ENCODE measurements at regions of chr3 and their contacts with region 1.

Region 1: GRCh38 chr3:14780927-14781507 is 37.7 kb upstream of the FGD5 start:
- DNase-seq: peak; percentile 80 to 85 (median 84)
- H3K4me3 ChIP-seq: no peak overlapping the region
- H3K27ac ChIP-seq: no peak overlapping the region
- H3K4me1 ChIP-seq: no peaks in the 10 kb centered on the region
- H3K27me3 ChIP-seq: no peaks in the 10 kb centered on the region

Region 2: DNA sequence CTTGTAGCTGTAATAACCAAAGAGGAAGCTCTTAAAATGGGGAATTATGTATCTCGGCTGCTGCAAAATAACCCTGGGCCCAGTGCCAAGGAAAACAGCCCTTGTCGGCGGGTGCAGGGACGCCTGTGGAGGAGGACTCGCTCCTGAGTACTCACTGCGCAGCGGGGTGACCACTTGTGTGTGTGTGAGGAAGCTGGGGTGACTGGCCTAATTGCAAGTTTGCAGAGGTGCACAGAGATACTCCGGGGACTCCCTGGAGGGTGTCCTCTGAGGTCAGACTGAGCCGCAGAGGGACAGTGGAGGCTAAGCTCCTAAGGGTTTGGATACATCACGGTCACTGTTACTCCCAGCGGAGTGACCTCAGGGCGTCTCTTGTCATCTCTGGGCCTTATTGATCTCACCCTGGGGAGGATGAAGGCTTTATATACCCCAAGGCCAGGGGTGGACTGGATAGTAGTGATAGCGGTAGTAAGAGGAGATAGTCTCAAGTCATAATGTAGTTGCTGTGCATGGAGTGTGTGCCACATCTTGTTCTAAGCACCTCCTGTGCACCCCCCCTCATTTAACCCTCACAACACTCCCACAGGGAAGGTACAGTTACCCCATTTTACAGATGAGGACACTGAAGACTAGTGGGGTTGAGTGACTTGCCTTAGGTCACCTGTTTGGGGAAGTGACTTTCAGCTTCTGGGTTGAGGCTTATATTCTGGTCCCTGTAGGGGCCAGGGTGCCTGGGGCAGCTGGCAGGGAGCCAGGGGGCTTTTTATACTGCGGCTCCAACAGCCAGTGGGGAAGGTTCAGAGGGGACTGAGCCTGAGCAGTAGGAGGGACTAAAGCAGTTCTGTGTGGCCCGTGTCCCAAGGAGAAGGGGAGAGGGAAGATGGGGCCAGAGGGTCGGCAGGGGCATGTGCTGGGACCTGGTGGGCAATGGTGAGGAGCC is 341.2 kb before region 1 on chr3:
- CTCF ChIA-PET with region 1: no interaction called
- POLR2A ChIA-PET with region 1: no interaction called
- DNase-seq: peak; percentile 70 to 92 (median 90)
- H3K4me3 ChIP-seq: peak overlapping the region in 4 of 7 experiments; percentile 19 to 61 (median 40)
- H3K27ac ChIP-seq: no peak overlapping the region
- H3K4me1 ChIP-seq: peaks cover 13 to 67% (median 54%) of the 10 kb centered on the region in 4 experiments
- H3K27me3 ChIP-seq: no peaks in the 10 kb centered on the region

Region 3: GRCh38 chr3:14602006-14602803 is 178.8 kb before region 1 on chr3:
- CTCF ChIA-PET with region 1: no interaction called
- POLR2A ChIA-PET with region 1: no interaction called
- DNase-seq: no peak
- H3K4me3 ChIP-seq: peak overlapping the region in 3 of 7 experiments; percentile 3 to 46 (median 38)
- H3K27ac ChIP-seq: no peak overlapping the region
- H3K4me1 ChIP-seq: peaks cover 0 to 7% (median 3%) of the 10 kb centered on the region in 4 experiments
- H3K27me3 ChIP-seq: peaks cover 12 to 99% (median 43%) of the 10 kb centered on the region in 5 experiments

Region 4: GRCh38 chr3:14633819-14634424 is 147.1 kb before region 1 on chr3:
- CTCF ChIA-PET with region 1: interaction called, 11 read pairs
- POLR2A ChIA-PET with region 1: no interaction called
- DNase-seq: peak; percentile 78 to 88 (median 85)
- H3K4me3 ChIP-seq: no peak overlapping the region
- H3K27ac ChIP-seq: no peak overlapping the region
- H3K4me1 ChIP-seq: no peaks in the 10 kb centered on the region
- H3K27me3 ChIP-seq: peaks cover 0 to 12% (median 6%) of the 10 kb centered on the region in 5 experiments

Region 5: DNA sequence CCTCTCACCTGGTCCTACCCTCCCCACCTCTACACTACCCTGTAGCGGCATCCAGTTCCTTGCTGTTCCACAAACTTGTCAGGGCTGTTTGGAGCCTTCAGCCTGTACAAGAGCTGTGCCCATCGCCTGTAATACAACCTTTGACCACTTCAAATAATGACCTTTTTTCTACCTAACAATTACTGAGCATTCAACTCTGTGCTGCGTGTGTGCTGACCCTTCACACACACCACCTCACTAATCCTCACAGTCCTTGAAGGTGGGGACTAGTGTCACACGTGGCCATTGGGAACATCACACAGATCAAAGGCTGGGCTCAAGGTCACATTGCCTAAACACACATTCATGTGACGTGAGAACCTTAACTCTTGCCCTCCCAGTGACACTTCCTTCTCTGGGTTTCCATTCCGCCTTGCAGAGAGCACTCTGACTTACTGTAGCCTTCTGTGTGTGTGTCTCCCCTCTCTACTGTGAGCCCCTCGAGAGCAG is 103.0 kb before region 1 on chr3:
- CTCF ChIA-PET with region 1: interaction called, 276 read pairs
- POLR2A ChIA-PET with region 1: interaction called, 7 read pairs
- DNase-seq: no peak
- H3K4me3 ChIP-seq: no peak overlapping the region
- H3K27ac ChIP-seq: no peak overlapping the region
- H3K4me1 ChIP-seq: no peaks in the 10 kb centered on the region
- H3K27me3 ChIP-seq: no peaks in the 10 kb centered on the region

Region 6: DNA sequence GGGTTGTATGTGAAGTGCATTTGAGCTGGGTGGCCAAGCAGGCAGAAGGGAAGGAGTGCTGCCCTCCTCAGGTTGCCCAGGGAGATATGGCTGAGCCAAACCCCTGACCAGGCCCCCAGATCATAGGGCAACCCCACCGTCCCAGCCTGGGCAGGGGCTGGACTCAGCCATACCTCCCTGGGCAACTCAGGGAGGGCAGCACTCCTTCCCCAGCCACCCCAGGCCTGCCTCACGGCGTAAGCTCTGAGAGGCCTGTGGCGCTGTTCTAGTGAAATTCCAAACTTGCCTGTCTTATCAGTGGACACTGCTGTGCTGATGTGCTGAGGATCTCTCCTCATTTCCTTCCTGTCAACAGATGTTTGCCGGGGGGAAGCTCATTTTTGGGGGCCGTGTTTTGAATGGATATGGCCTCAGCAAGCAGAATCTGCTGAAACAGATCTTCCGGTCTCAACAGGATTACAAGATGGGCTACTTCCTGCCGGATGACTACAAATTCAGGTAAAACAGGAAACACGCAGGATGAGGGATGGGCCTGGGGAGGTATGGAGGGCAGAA is 19.8 kb before region 1 on chr3:
- CTCF ChIA-PET with region 1: interaction called, 11 read pairs
- POLR2A ChIA-PET with region 1: no interaction called
- DNase-seq: peak; percentile 97 to 100 (median 99)
- H3K4me3 ChIP-seq: peak overlapping the region in 4 of 7 experiments; percentile 2 to 43 (median 19)
- H3K27ac ChIP-seq: peak overlapping the region; percentile 44 to 82
- H3K4me1 ChIP-seq: peaks cover 0 to 23% (median 18%) of the 10 kb centered on the region in 4 experiments
- H3K27me3 ChIP-seq: no peaks in the 10 kb centered on the region

Region 7: DNA sequence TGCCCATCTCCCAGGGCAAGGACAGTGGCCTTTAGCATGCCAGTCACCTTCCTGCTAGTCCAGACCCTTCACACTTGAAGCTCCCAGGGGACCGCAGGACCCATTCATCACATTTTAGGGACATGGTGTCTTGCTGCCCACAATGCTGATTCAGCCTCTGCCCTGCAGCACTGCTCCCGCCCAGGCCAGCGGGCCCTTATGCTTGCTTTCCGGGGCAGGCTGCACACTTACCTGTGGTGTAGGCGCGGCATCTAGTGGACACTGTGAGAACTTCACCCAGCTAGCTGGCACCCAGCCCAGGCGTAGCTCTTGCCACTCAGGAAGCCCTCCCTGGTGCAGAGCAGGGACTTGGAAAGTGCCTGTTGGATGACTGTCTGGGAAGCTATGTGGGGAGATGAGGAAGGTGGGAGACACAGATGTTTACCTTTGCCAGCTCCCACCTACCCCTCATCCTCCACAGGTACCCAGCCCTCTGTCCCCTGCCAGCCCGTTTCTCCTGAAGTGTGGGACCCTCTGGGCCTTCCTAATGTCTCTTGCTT is 140.1 kb after region 1 on chr3:
- CTCF ChIA-PET with region 1: interaction called, 337 read pairs
- POLR2A ChIA-PET with region 1: no interaction called
- DNase-seq: peak; percentile 85 to 91 (median 88)
- H3K4me3 ChIP-seq: no peak overlapping the region
- H3K27ac ChIP-seq: no peak overlapping the region
- H3K4me1 ChIP-seq: peaks cover 0 to 7% (median 2%) of the 10 kb centered on the region in 4 experiments
- H3K27me3 ChIP-seq: no peaks in the 10 kb centered on the region

Measured in common myeloid progenitor, CD34-positive (primary cell).